ENCODE measurements at regions of chr10 and their contacts with region 1.

Region 1: GRCh38 chr10:100518761-100519241 is 860 bp downstream of the SEC31B start:
- DNase-seq: no peak
- H3K4me3 ChIP-seq: peak overlapping the region; percentile 42 to 61 (median 56)
- H3K27ac ChIP-seq: peak overlapping the region in 1 of 4 donors; percentile 37
- H3K4me1 ChIP-seq: peaks cover 0 to 17% (median 14%) of the 10 kb centered on the region in 4 donors
- H3K27me3 ChIP-seq: peaks cover 0 to 4% (median 0%) of the 10 kb centered on the region in 3 donors
- CTCF ChIP-seq: peak; percentile 38 to 65 (median 62)
- EP300 ChIP-seq: no peak
- POLR2A ChIP-seq: no peak

Region 2: DNA sequence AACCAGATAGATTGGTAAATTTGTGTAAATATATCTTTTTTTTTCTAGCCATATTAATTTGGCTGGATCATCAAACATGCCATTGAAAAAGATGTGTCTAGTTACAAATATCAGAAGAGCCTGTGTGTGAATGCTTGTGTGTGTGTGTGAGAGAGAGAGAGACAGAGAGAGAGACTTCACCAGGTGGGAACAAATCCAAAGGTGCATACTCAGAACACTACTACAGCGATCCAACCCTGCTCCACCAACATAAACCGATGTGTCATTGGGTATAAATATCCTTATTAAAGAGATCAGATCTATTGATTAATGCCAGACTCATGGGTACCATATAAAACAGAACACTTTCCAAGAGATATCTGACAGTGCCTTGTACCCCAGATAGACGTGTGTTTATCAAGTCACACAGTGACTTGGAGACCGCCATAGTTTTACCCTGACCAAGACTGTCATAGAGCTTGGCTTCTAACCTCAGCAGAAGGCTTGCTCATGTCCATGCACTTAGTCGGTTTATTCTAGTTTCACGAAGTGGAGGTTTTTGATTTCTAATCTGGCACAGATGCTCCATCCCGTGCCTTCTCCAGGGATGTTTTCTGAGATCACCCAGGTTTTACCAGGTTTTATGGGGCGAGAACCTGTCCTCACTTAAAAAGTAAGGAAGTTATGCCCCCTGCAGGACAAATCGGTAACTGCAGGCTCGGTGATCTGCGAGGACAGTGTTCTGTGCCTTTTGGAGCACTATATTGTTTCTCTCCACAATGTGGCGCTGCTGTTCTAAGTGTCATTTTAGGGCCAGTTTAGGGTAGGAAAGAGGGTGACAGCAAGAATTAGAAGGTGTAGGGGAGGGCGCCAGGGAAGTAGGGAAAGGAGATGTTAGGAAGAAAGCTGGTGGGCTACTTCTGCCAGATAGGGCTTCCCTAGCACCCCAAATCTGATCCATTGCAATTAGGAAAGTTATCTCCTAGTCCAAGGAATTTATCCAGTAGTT is 85.3 kb before region 1 on chr10:
- intact Hi-C with region 1: loop called (anchors 5 kb)
- DNase-seq: peak; percentile 93
- H3K4me3 ChIP-seq: no peak overlapping the region
- H3K27ac ChIP-seq: no peak overlapping the region
- H3K4me1 ChIP-seq: no peaks in the 10 kb centered on the region
- H3K27me3 ChIP-seq: no peaks in the 10 kb centered on the region
- CTCF ChIP-seq: peak; percentile 97 to 100 (median 100)
- EP300 ChIP-seq: no peak
- POLR2A ChIP-seq: no peak

Measured in sigmoid colon (tissue), 7 donors.